Sigmoid colon (tissue), 7 donors: ENCODE measurements at regions of chr17 and their contacts with region 1.

Region 1: DNA sequence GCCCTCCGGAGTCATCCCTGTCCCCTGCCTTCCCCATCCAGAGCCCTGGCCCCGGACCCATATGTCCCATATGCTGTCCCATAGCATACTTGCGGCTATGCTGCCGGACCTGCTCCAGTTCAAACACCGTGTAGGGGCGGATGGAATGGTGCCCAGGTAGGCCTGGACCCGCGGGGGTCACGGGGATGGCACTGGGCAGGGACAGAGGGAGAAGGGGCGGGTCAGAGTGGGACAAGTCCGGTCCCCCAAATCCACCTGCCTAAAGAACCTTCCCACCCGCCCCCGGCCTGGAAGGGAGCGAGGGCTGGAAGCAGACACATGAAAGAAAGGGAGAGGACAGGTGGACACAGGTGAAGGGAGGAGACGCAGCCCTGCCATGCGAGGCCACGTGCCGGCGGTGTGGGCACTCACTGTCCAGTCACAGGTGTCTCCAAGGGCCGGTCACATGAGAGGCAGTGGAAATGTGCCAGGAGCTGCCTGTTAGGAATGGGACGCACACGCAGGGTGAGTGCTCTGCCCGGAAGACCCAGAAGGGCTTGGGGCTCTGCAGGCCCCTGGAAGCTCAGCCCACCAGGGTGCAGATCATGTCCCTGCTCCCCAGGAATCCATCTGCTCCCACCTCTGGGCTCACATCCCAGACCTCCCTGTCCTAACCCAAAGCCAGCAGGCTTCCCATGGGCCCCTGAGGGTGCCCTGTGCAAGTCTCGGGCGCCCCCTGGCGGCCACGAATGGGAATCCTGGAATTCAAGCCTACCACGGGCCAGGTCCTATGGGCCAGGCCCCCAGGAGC is 14.0 kb downstream of the UBALD2 start:
- DNase-seq: peak; percentile 94
- H3K4me3 ChIP-seq: no peak overlapping the region
- H3K27ac ChIP-seq: no peak overlapping the region
- H3K4me1 ChIP-seq: peaks cover 0 to 21% (median 6%) of the 10 kb centered on the region in 4 donors
- H3K27me3 ChIP-seq: no peaks in the 10 kb centered on the region
- CTCF ChIP-seq: peak; percentile 93 to 98 (median 95)
- EP300 ChIP-seq: no peak
- POLR2A ChIP-seq: no peak

Region 2: DNA sequence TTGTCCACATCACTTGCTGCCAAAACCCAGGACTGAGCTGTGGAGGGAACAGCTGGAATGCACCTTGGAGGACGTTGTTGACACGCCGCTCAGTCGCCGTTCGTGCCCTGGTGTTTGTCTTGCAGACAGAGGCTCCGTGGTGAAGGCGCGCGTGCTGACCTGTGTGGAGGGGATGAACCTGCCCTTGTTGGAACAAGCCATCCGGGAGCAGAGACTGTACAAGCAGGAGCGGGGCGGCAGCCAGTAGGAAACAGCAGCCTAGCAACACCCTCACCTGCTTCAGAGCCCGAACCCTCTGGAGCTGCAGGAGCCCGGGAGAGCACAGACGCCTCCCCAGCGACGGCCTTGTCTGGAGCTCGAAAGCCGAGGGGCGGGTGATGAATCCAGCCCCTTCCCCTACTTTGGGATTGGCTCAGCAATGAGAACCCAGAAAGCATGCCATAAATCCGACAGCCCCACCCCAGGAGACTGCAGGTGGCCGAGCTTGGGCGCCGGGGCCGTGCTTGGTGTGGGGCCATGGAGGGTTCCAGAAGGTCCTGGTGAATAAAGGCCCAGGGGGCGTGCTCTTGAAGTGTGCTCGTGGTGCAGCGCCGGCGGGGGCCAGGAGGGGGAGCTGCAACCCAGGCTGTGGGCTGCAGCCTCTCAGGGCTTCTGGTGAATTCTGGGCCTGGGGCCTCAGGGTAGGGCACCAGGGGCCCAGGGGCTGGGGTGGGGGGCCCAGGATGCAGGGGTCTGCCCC is 279.0 kb before region 1 on chr17:
- intact Hi-C with region 1: loop called (anchors 5 kb)
- DNase-seq: no peak
- H3K4me3 ChIP-seq: no peak overlapping the region
- H3K27ac ChIP-seq: peak overlapping the region in 1 of 4 donors; percentile 3
- H3K4me1 ChIP-seq: peaks cover 0 to 17% (median 4%) of the 10 kb centered on the region in 4 donors
- H3K27me3 ChIP-seq: no peaks in the 10 kb centered on the region
- CTCF ChIP-seq: peak in 3 of 4 experiments; percentile 43 to 77 (median 64)
- EP300 ChIP-seq: no peak
- POLR2A ChIP-seq: no peak

Region 3: DNA sequence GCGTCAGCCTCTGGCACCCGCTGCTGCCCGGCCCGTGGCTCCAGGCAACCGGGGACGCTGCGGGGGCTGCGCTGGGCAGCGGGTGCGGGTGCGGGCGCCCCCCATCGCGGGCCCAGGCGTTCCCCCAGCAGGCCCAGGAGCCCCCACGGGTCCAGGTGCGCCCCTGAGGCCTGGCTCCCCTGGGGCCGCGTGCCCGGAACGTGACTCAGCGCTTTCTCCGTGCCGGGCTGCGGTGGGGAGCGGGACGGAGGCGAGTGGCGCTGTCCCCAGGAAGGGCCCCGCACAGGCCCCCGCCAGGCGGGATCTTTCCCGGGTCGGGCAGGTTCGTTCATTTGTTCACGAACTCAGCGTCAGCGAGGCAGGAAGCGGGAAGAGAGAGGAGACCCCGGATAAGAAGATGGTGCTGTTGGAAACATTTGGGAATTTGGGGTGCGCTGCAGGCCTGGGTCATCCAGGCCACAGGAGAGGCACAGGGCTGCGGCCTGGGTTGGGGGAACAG is 157.2 kb before region 1 on chr17:
- intact Hi-C with region 1: loop called (anchors 1 kb)
- DNase-seq: peak; percentile 78
- H3K4me3 ChIP-seq: peak overlapping the region in 3 of 4 donors; percentile 34 to 51 (median 46)
- H3K27ac ChIP-seq: peak overlapping the region in 2 of 4 donors; percentile 21 to 68
- H3K4me1 ChIP-seq: peaks cover 2 to 11% (median 10%) of the 10 kb centered on the region in 4 donors
- H3K27me3 ChIP-seq: no peaks in the 10 kb centered on the region
- CTCF ChIP-seq: no peak
- EP300 ChIP-seq: no peak
- POLR2A ChIP-seq: no peak

Region 4: DNA sequence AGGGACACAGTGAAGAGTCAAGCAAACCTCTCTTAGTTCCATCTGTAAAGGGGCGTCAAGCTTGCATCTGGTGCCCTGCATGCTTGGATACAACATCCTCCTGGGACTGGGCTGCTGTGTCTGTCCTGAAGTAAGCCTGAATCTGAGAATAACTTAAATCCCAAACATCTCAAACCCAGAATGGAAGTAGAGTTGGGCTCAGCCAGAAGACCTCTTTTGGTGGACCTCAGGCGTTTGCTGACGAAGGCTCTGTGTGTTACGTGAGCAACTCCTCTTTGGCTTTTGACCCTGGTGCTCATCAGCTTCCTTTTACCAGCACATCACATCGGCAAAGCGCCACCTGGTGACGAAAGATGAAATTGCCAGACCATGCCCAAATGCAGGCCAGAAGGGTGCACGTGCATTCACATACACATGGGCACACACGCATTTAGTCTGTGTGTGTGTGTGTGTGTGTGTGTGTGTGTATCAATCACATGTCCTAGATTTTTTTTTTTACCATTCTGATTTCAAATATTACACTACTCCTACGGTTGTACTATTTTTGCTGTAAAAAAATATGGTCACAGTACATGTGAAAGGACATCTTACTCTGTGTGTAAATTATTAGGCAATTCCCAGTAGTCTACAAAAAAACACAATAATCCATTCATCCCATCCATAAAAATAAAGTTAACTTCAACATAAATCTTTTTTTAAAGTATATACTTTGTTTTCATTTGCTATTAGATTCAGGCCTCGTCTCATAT is 97.0 kb before region 1 on chr17:
- intact Hi-C with region 1: loop called (anchors 1 kb)
- DNase-seq: peak; percentile 93
- H3K4me3 ChIP-seq: no peak overlapping the region
- H3K27ac ChIP-seq: peak overlapping the region in 1 of 4 donors; percentile 7
- H3K4me1 ChIP-seq: peaks cover 0 to 4% (median 0%) of the 10 kb centered on the region in 4 donors
- H3K27me3 ChIP-seq: no peaks in the 10 kb centered on the region
- CTCF ChIP-seq: peak; percentile 80 to 91 (median 86)
- EP300 ChIP-seq: no peak
- POLR2A ChIP-seq: no peak